MCF 10A (cell line): ENCODE measurements at regions of chr9 and their contacts with region 1.

Region 1: GRCh38 chr9:28927711-28928110 is 1354.4 kb upstream of the C9orf72 start:
- DNase-seq: peak; percentile 83
- H3K4me3 Mint-ChIP-seq: no peak overlapping the region
- H3K27ac Mint-ChIP-seq: peak overlapping the region; percentile 41
- H3K4me1 Mint-ChIP-seq: peaks cover 26% of the 10 kb centered on the region
- H3K27me3 Mint-ChIP-seq: no peaks in the 10 kb centered on the region
- CTCF ChIP-seq: no peak

Region 2: GRCh38 chr9:28887188-28887884 is 40.4 kb before region 1 on chr9:
- CTCF ChIA-PET with region 1: no interaction called
- POLR2A ChIA-PET with region 1: interaction called, 5 read pairs
- intact Hi-C with region 1: loop called (anchors 5 kb)
- DNase-seq: peak; percentile 27
- H3K4me3 Mint-ChIP-seq: no peak overlapping the region
- H3K27ac Mint-ChIP-seq: peak overlapping the region; percentile 31
- H3K4me1 Mint-ChIP-seq: peaks cover 6% of the 10 kb centered on the region
- H3K27me3 Mint-ChIP-seq: no peaks in the 10 kb centered on the region
- CTCF ChIP-seq: no peak